Colonic mucosa (tissue), 4 donors: ENCODE measurements at regions of chr19 and their contacts with region 1.

Region 1: GRCh38 chr19:7852851-7853769 is 21.1 kb downstream of the PRR36 start:
- DNase-seq: peak; percentile 86
- H3K4me3 ChIP-seq: no peak overlapping the region
- H3K27ac ChIP-seq: no peak overlapping the region
- H3K4me1 ChIP-seq: peaks cover 10% of the 10 kb centered on the region
- H3K27me3 ChIP-seq: no peaks in the 10 kb centered on the region
- CTCF ChIP-seq: peak; percentile 85

Region 2: DNA sequence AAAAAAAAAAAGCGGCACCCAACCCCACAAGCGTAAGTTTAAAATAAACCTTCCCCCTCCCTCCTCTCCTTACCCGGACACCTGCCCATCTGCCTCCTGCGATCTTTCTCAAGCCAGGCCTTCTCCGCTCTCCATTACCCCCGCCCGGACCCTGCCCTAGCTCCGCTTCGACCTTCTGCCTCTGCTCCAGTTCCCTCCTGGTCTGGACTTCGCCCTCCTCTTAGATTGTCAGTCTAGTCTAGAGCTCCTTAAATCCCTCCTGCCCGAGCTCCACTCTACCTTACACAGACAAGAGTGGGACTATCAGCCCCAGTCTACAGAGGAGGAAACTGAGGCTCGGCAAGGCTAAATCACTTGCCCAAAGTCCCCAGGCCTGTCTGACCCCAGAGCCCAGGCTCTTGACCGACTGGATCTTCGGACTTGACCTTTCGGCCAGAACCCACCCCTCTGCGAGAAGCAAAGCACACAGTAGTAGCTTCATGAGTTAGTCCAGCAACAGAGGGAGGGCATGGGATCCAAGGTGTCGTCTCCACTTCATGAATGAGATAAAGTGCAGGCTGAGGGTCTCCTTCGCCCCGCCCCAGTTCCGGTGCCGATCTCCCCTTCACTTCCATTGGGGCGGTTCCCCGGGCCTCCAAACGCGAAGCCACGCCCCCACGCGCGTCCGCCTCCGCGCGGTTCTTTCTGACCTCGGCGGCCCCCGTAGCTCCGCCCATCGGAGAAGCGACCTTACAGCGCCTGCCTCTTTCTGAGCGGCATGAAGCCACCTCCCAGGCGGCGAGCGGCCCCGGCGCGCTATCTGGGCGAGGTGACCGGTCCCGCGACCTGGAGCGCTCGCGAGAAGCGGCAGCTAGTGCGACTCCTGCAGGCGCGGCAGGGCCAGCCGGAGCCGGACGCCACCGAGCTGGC is 66.8 kb after region 1 on chr19 and contains the start of gene SNAPC2:
- intact Hi-C with region 1: loop called (anchors 10 kb)
- DNase-seq: peak; percentile 97
- H3K4me3 ChIP-seq: peak within 1 kb of the TSS; percentile 49
- H3K27ac ChIP-seq: peak within 1 kb of the TSS; percentile 80
- H3K4me1 ChIP-seq: peaks cover 14% of the 10 kb centered on the region
- H3K27me3 ChIP-seq: peaks cover 40% of the 10 kb centered on the region
- CTCF ChIP-seq: no peak
- total RNA-seq, gene SNAPC2: 13.4 to 15.4 TPM

Region 3: GRCh38 chr19:8120636-8121480 is 267.7 kb after region 1 on chr19:
- intact Hi-C with region 1: no loop called
- DNase-seq: no peak
- H3K4me3 ChIP-seq: no peak overlapping the region
- H3K27ac ChIP-seq: no peak overlapping the region
- H3K4me1 ChIP-seq: no peaks in the 10 kb centered on the region
- H3K27me3 ChIP-seq: no peaks in the 10 kb centered on the region
- CTCF ChIP-seq: no peak